ENCODE measurements at regions of chr3 and their contacts with region 1.

Region 1: DNA sequence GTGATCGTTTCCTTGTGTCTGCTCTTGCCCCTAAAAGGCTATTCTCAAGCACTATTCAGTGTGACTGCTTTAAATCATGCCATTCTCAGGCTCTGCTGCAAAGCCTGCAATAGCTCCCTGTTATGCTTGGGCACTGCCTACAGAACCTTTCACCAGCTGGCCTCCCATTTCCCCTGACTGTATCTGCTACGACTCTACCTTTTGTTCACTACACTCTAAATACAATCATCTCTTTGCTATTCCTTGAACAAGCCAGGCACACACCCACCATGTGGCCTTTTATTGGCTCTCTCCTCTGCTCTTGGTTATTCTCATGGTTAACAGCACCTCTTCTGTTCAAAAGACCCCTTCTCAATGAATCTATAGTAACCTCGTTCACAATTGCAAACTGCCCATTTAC is 29.6 kb upstream of the FNDC3B start:
- DNase-seq: no peak
- H3K27ac ChIP-seq: no peak overlapping the region
- CTCF ChIP-seq: no peak

Region 2: GRCh38 chr3:171712171-171712938 is 297.4 kb before region 1 on chr3:
- CTCF ChIA-PET with region 1: no interaction called
- POLR2A ChIA-PET with region 1: no interaction called
- DNase-seq: no peak
- H3K27ac ChIP-seq: no peak overlapping the region
- CTCF ChIP-seq: no peak

Region 3: GRCh38 chr3:171994646-171995428 is 15.0 kb before region 1 on chr3:
- CTCF ChIA-PET with region 1: interaction called, 12 read pairs
- POLR2A ChIA-PET with region 1: no interaction called
- DNase-seq: no peak
- H3K27ac ChIP-seq: no peak overlapping the region
- CTCF ChIP-seq: no peak

Region 4: DNA sequence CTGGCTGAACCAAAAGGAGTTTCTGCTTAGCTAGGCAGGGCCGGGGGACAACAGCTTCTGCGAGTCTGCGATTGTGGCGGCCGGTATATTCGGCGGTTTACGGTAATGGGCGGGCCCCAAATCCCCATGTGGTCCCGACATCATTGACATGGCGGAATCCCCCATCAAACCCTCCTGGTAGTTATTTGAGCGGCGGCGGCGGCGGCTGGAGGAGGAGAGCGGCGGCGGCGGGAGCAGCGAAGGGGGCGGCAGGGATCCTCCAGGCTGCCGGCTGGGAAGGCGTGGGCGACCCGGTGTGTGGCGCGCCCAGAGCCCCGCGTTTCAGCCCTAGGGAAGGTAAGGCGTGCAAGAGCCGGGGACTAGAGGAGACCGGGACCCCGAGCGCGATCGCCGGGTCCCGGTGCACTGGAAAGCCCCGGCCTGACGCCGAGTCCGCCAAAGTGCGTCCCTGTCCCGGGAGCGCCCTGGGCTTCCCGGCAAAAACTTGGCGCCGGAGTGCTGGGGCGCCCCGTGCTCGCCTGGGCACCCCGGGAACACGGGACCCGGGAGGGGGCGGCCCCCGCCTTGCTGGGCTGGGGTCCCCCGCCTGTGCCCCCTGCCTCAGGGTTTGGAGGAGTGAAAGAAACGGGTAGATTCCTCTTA is 29.8 kb after region 1 on chr3 and contains the start of gene FNDC3B:
- CTCF ChIA-PET with region 1: no interaction called
- POLR2A ChIA-PET with region 1: interaction called, 16 read pairs
- DNase-seq: peak; percentile 92
- H3K27ac ChIP-seq: peak within 1 kb of the TSS; percentile 97
- CTCF ChIP-seq: no peak